ENCODE measurements at regions of chr1 and their contacts with region 1.

Region 1: GRCh38 chr1:7667625-7668218 is 103.4 kb upstream of the VAMP3 start:
- DNase-seq: peak; percentile 88
- H3K4me3 ChIP-seq: peak overlapping the region in 1 of 2 experiments; percentile 58; a peak in 2 of 4 replicates
- H3K27ac ChIP-seq: peak overlapping the region; percentile 72 to 100
- H3K4me1 ChIP-seq: peaks cover 5 to 53% of the 10 kb centered on the region in 2 experiments; a peak in 3 of 4 replicates
- H3K27me3 ChIP-seq: no peaks in the 10 kb centered on the region
- CTCF ChIP-seq: peak; percentile 94
- EP300 ChIP-seq: no peak
- RAD21 ChIP-seq: peak; percentile 98

Region 2: GRCh38 chr1:7491109-7491817 is 176.5 kb before region 1 on chr1:
- CTCF ChIA-PET with region 1: no interaction called
- POLR2A ChIA-PET with region 1: no interaction called
- DNase-seq: no peak
- H3K4me3 ChIP-seq: no peak overlapping the region
- H3K27ac ChIP-seq: peak overlapping the region in 1 of 2 experiments; percentile 76; a peak in 2 of 4 replicates
- H3K4me1 ChIP-seq: peaks cover 5 to 54% of the 10 kb centered on the region in 2 experiments; a peak in 2 of 4 replicates
- H3K27me3 ChIP-seq: no peaks in the 10 kb centered on the region
- CTCF ChIP-seq: no peak
- EP300 ChIP-seq: no peak
- RAD21 ChIP-seq: no peak

Region 3: GRCh38 chr1:7586021-7586941 is 81.4 kb before region 1 on chr1:
- CTCF ChIA-PET with region 1: interaction called, 16 read pairs
- POLR2A ChIA-PET with region 1: interaction called, 3 read pairs
- DNase-seq: peak; percentile 61
- H3K4me3 ChIP-seq: no peak overlapping the region; a peak in 1 of 4 replicates
- H3K27ac ChIP-seq: peak overlapping the region in 1 of 2 experiments; percentile 99; a peak in 2 of 4 replicates
- H3K4me1 ChIP-seq: peaks cover 0 to 98% of the 10 kb centered on the region in 2 experiments; a peak in 2 of 4 replicates
- H3K27me3 ChIP-seq: no peaks in the 10 kb centered on the region
- CTCF ChIP-seq: no peak
- EP300 ChIP-seq: peak in 1 of 2 experiments; percentile 33; a peak in 1 of 4 replicates
- RAD21 ChIP-seq: no peak

Region 4: GRCh38 chr1:7646981-7647901 is 20.5 kb before region 1 on chr1:
- CTCF ChIA-PET with region 1: interaction called, 19 read pairs
- POLR2A ChIA-PET with region 1: interaction called, 3 read pairs
- DNase-seq: peak; percentile 94
- H3K4me3 ChIP-seq: no peak overlapping the region; a peak in 1 of 4 replicates
- H3K27ac ChIP-seq: peak overlapping the region in 1 of 2 experiments; percentile 85; a peak in 2 of 4 replicates
- H3K4me1 ChIP-seq: peaks cover 0 to 39% of the 10 kb centered on the region in 2 experiments; a peak in 1 of 4 replicates
- H3K27me3 ChIP-seq: no peaks in the 10 kb centered on the region
- CTCF ChIP-seq: peak; percentile 88
- EP300 ChIP-seq: no peak
- RAD21 ChIP-seq: peak; percentile 95

Region 5: GRCh38 chr1:7690496-7691182 is 22.9 kb after region 1 on chr1:
- CTCF ChIA-PET with region 1: interaction called, 112 read pairs
- POLR2A ChIA-PET with region 1: interaction called, 6 read pairs
- DNase-seq: no peak
- H3K4me3 ChIP-seq: no peak overlapping the region
- H3K27ac ChIP-seq: no peak overlapping the region
- H3K4me1 ChIP-seq: peaks cover 0 to 12% of the 10 kb centered on the region in 2 experiments; a peak in 1 of 4 replicates
- H3K27me3 ChIP-seq: no peaks in the 10 kb centered on the region
- CTCF ChIP-seq: no peak
- EP300 ChIP-seq: no peak
- RAD21 ChIP-seq: no peak

Region 6: DNA sequence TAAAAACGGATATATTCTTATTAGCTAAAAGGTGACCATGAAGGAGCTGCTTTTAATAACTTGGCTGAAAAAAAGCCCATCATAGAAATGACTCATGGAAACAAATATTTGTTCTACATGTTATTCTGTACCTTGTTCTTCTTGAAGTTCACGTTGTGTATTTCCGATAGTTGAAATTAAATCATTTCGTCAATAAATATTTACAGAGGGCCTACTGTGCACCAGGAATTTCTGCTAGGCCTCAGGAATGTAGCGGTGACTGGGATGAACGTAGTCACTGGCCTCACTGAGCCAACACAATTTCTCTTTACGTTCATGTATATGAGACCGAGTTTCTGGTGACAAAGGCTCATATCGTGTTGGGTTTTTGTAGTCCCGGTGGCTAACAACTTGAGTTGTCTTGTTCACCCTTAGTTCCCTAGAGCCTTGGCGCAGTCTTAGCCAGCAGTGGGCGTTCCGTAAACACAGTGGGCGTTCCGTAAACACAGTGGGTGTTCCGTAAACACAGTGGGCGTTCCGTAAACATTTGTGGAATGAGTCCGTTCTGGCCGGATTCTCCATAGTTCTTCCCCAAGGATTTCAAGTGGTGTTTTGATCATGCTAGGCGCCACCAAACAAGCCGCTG is 50.1 kb after region 1 on chr1:
- CTCF ChIA-PET with region 1: interaction called, 31 read pairs
- POLR2A ChIA-PET with region 1: interaction called, 4 read pairs
- DNase-seq: no peak
- H3K4me3 ChIP-seq: no peak overlapping the region
- H3K27ac ChIP-seq: no peak overlapping the region
- H3K4me1 ChIP-seq: peaks cover 0 to 10% of the 10 kb centered on the region in 2 experiments; a peak in 1 of 4 replicates
- H3K27me3 ChIP-seq: no peaks in the 10 kb centered on the region
- CTCF ChIP-seq: no peak
- EP300 ChIP-seq: no peak
- RAD21 ChIP-seq: no peak

Region 7: GRCh38 chr1:7752512-7753417 is 85.0 kb after region 1 on chr1:
- CTCF ChIA-PET with region 1: interaction called, 739 read pairs
- POLR2A ChIA-PET with region 1: interaction called, 66 read pairs
- DNase-seq: peak; percentile 62
- H3K4me3 ChIP-seq: no peak overlapping the region; a peak in 3 of 4 replicates
- H3K27ac ChIP-seq: peak overlapping the region in 1 of 2 experiments; percentile 77; a peak in 2 of 4 replicates
- H3K4me1 ChIP-seq: peaks cover 0 to 17% of the 10 kb centered on the region in 2 experiments; a peak in 2 of 4 replicates
- H3K27me3 ChIP-seq: no peaks in the 10 kb centered on the region
- CTCF ChIP-seq: peak; percentile 75
- EP300 ChIP-seq: no peak
- RAD21 ChIP-seq: peak; percentile 91

Region 8: GRCh38 chr1:7902478-7903085 is 234.9 kb after region 1 on chr1:
- CTCF ChIA-PET with region 1: interaction called, 73 read pairs
- POLR2A ChIA-PET with region 1: interaction called, 3 read pairs
- DNase-seq: peak; percentile 80
- H3K4me3 ChIP-seq: peak overlapping the region in 1 of 2 experiments; percentile 44; a peak in 1 of 4 replicates
- H3K27ac ChIP-seq: no peak overlapping the region
- H3K4me1 ChIP-seq: no peaks in the 10 kb centered on the region
- H3K27me3 ChIP-seq: no peaks in the 10 kb centered on the region
- CTCF ChIP-seq: peak; percentile 67
- EP300 ChIP-seq: no peak
- RAD21 ChIP-seq: peak; percentile 83

Measured in SK-N-SH (cell line).